ENCODE measurements at regions of chr1 and their contacts with region 1.

Region 1: DNA sequence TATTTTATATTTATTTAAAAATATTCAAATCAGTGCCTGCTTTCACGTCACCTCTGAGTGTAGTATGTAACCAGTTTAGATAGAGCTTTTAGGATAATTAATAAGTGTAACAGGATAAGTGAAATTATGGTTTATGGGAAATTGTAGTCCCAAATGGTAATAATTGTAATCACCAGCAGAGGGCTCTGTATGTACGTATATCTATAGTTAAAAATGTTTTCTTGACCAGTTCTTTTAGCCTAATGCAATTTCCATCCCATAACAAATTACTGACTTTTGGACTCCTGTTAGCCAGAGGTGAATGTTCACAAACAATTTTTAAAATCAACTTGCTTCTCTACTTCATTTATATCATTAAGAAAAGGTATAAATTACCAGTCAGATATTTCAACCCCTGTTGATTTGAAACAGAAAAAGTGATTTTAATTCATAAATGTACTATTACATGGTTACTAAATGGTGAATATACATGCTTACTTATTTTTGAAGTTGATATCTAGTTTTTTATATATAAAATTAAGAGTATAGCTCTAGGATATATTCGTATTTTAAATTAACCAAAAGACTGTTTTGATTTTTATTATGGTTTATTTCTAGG is 25.3 kb downstream of the SLC30A7 start:
- DNase-seq: peak; percentile 30
- CTCF ChIP-seq: peak; percentile 48

Region 2: DNA sequence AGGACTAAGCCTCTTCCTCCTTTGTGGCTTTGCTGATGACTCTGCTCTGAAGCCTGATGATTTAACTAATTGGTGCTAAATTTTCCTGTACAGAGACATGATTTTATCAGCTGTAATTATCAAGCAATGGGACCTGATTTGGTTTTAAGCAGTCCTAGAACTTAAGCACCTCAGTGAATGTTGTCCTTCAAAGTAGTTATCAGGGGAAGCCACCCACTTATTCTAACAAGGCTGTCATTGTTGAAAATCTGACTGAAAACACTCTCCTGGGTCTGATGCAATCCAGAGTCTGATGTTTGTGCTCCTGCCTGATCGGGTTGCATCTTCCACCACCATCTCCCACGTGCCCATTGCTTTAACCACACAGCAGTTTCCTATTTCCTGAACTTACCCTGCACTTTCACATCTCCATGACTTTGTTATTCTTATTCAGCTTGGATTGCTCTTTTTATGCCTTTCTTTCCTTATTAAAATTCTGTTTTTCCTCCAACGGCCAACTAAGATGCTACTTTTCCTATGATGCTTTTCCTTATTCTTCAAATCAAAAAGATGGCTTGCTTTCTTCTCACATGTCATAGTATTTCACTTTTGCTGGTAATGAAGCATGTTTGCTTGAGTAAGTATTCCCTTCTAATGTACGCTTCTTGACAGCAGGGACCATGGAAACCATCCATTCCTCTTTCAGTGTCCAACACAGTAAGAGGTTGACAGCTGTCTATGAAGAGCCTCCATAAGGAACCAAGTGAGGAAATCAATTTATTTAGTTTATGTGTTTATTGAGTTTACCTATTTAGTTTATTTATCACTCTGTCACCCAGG is 370.6 kb after region 1 on chr1:
- in situ Hi-C with region 1: loop called (anchors 5 kb)
- DNase-seq: peak; percentile 47
- CTCF ChIP-seq: no peak

Measured in GM13976 (cell line).